GM10248 (cell line): ENCODE measurements at regions of chr5 and their contacts with region 1.

Region 1: DNA sequence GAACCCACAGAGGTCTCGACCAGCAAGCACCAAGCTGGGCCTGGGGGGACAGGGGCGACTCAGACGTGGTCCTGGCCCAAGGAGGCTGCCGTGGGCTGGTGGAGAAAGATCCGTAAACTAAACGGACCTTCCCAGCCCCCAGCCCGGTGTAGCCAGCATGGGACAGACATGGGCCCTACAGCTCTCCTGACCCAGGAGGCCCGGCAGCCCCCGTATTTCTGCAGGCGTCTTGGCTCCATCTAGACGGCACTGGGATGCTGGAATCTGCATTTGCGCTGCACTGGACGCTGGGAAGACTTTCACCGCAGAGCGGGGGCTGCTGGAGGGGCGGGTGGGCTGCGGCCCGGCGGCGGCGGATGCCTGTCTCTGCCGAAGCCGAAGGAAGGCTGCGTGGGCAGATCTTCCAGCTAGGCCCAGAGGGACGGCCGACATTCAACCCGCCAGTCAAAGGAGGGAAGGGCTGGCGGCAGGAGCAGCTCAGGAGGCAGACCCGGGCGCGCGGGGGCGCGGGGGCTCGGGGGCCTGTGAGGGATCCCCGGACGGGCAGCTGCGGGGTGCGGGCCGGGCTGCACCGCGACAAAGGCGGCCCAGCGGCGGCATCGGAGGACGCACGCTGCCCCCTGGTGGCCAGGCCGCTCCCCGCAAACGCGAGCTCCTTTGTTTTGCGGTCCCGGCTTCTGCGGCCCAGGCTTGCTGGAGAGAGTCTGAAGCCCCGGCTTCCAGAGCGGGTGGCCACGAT is 266.2 kb downstream of the NSG2 start:
- DNase-seq: peak; percentile 85
- CTCF ChIP-seq: peak; percentile 90

Region 2: GRCh38 chr5:173884402-173885061 is 427.2 kb before region 1 on chr5:
- CTCF ChIA-PET with region 1: no interaction called
- POLR2A ChIA-PET with region 1: no interaction called
- DNase-seq: no peak
- CTCF ChIP-seq: no peak

Region 3: DNA sequence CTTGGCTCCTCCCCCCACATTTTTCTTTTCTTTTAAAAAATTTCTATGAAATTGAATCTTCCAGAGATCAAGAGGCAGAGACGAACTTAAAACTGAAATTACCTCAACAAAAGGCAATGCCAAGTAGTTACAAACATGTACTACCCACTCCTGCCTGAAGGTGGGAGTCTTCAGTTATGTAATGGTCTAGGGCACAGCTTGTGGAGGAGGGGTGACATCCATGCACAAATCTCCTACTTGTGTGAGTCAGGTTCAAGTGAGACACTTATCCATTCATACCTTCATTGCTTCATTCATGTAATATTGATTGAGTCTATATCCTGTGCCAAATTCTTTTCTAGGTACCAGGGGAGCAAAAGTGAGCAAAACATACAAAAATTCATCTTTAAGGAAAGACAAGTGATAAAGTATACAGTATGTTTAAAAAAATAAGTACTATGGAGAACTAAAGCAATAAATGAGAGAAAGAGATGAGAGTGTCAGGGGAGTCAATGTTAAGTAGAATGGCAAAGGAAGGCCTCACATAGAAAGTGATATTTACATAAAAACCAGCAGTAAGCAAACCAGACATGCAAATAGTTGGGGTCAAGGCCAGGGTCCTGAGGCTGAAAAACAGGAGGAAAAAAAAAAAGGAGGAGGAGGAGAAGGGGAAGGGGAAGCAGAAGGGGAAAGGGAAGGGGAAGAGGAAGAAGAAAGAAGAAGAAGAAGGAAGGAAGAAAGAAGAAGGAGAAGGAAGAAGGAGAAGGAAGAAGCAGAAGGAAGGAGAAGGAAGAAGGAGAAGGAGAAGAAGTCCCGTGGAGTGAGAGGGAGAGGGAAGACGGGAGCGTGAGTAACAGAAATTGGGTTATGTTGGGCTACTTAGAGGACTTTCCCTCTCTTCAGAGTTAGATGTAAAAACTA is 291.1 kb before region 1 on chr5:
- CTCF ChIA-PET with region 1: interaction called, 18 read pairs
- POLR2A ChIA-PET with region 1: no interaction called
- DNase-seq: peak; percentile 43
- CTCF ChIP-seq: peak; percentile 51

Region 4: GRCh38 chr5:174045470-174046025 is 266.2 kb before region 1 on chr5 and contains the start of gene NSG2:
- CTCF ChIA-PET with region 1: interaction called, 80 read pairs
- POLR2A ChIA-PET with region 1: no interaction called
- DNase-seq: peak; percentile 66
- CTCF ChIP-seq: peak; percentile 61

Region 5: DNA sequence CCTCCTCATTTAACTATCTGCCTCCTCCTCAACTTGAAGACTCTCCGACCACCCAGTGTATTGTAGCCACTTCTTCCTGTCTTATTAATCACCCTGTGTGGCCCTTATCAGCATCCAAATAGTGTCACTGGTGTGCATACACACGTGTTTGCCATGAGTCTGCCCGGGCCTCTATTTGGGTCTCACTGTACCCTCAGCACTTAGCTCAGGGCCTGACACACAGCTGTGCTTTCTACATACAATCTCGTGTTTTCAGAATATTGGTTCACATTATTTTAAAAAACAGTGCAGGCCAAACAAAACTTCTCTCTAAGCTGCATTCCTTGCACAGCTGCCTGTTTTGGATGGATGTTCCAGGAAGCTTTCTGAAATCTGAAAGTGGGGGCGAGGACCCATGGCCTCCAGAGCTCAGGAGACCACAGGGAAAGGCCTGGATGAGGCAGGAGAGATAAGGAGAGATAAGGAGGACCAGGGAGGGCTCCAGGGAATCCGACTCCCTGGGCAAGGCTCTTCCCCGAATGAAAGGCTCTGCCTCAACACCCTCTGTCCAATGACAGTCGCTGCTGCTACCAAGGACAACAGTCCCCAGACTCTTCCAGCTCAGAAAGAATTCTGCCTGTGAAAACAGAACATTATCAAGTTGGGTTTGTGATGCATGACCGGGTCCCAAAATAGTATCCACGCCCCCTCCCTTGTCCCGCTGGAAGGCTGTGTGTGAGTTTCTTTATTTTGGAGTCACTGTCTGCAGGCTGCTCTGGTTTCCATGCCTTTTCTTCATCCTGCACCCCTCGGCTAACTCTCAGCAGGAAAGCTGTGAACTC is 10.5 kb before region 1 on chr5:
- CTCF ChIA-PET with region 1: interaction called, 38 read pairs
- POLR2A ChIA-PET with region 1: no interaction called
- DNase-seq: peak; percentile 5
- CTCF ChIP-seq: no peak

Region 6: GRCh38 chr5:174327317-174328236 is 15.9 kb after region 1 on chr5:
- CTCF ChIA-PET with region 1: interaction called, 42 read pairs
- POLR2A ChIA-PET with region 1: no interaction called
- DNase-seq: peak; percentile 77
- CTCF ChIP-seq: peak; percentile 73